GM12878 (cell line): ENCODE measurements at regions of chr15 and their contacts with region 1.

Region 1: DNA sequence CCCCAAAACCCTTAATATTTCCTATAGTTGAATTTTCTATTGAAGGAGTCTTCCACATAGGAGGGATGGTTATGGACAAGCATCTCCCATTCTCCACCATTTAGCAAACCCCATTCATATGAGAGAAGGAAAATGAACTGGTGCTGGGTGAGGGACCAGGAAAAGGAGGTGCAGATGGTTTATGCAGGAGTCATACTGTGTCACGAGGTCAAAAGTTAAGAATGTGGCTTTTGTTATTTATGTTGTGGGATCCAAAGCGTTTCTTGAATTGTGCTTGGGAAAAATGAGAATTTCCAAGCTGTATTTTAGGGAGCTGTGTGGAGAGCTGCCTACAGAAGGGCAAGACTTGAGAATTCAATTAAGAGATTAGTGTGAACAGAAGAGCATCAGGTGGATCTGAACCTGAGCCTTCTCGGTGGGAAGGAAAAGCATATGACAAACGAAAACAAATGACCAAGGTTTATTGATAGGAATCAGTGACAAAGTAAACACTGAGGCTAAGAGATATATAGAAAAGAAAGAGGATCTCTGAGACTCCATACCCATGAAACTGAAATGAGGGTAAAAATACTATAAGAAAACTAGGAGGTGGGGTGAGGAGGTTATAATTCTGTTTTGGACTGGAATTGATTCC is 473.3 kb upstream of the NR2F2 start:
- DNase-seq: no peak
- ATAC-seq: no peak
- H3K4me3 ChIP-seq: no peak overlapping the region
- H3K27ac ChIP-seq: no peak overlapping the region
- H3K4me1 ChIP-seq: no peaks in the 10 kb centered on the region
- H3K27me3 ChIP-seq: no peaks in the 10 kb centered on the region
- CTCF ChIP-seq: no peak
- EP300 ChIP-seq: no peak
- POLR2A ChIP-seq: no peak
- RAD21 ChIP-seq: no peak

Region 2: GRCh38 chr15:95760501-95760900 is 96.7 kb before region 1 on chr15:
- CTCF ChIA-PET with region 1: no interaction called
- POLR2A ChIA-PET with region 1: no interaction called
- RAD21 ChIA-PET with region 1: no interaction called
- SMC1A ChIA-PET with region 1: no interaction called
- in situ Hi-C with region 1: no loop called
- intact Hi-C with region 1: no loop called
- DNase-seq: no peak
- ATAC-seq: peak; percentile 83
- H3K4me3 ChIP-seq: no peak overlapping the region
- H3K27ac ChIP-seq: no peak overlapping the region
- H3K4me1 ChIP-seq: no peaks in the 10 kb centered on the region
- H3K27me3 ChIP-seq: no peaks in the 10 kb centered on the region
- CTCF ChIP-seq: peak; percentile 11 to 28 (median 14); a peak in 2 of 6 replicates
- EP300 ChIP-seq: no peak
- POLR2A ChIP-seq: no peak
- RAD21 ChIP-seq: peak; percentile 46

Region 3: GRCh38 chr15:95869920-95870319 is 12.7 kb after region 1 on chr15:
- CTCF ChIA-PET with region 1: interaction called, 16 read pairs
- POLR2A ChIA-PET with region 1: interaction called, 3 read pairs
- RAD21 ChIA-PET with region 1: interaction called, 10 read pairs
- SMC1A ChIA-PET with region 1: interaction called, 6 read pairs
- in situ Hi-C with region 1: no loop called
- intact Hi-C with region 1: no loop called
- DNase-seq: no peak
- ATAC-seq: peak; percentile 66
- H3K4me3 ChIP-seq: no peak overlapping the region
- H3K27ac ChIP-seq: no peak overlapping the region
- H3K4me1 ChIP-seq: 0 out of 2 replicates have a peak, but pooled peaks cover 3% of the 10 kb centered on the region
- H3K27me3 ChIP-seq: no peaks in the 10 kb centered on the region
- CTCF ChIP-seq: no peak
- EP300 ChIP-seq: 0 out of 4 replicates have a peak, but pooled peaks of 1 of the 2 experiments have one; percentile 12
- POLR2A ChIP-seq: no peak
- RAD21 ChIP-seq: no peak